ENCODE measurements at regions of chr3 and their contacts with region 1.

Region 1: DNA sequence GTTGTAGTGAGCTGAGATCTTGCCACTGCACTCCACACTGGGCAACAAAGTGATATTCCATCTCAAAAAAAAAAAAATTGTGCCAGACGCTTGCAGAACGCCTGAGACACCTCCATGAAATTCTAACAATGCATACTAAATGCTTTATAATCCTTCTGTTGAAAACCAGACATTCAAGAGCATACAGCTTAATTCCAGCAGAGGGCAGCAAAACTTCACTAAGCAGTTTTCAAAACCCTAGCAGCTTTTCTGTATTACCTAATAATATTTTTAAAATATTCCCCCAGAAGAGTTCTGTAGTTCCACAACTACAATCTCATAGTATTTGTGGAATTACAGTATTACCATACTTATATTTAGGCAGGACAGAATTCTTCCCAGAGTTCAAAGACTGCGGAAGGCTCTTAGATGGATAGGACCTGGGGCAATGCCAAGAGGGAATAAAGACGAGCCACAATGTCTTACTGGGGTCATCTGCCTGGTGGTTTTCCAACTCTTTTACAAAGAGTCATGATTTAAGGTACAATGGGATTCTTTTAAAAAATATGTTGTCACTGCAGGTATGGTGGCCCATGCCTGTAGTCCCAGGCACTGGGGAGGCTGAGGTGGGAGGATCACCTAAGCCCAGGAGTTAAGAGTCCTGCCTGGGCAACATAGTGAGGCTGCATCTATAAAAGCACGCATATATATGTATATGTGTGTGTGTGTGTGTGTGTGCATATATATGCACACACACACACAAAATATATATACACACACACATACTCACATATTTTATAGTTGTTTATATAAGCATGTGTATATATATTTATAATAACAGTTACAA is 19.6 kb upstream of the TASOR start:
- DNase-seq: peak; percentile 77
- H3K4me3 Mint-ChIP-seq: no peak overlapping the region
- H3K27ac Mint-ChIP-seq: no peak overlapping the region
- H3K4me1 Mint-ChIP-seq: no peaks in the 10 kb centered on the region
- H3K27me3 Mint-ChIP-seq: no peaks in the 10 kb centered on the region
- CTCF ChIP-seq: peak; percentile 75

Region 2: DNA sequence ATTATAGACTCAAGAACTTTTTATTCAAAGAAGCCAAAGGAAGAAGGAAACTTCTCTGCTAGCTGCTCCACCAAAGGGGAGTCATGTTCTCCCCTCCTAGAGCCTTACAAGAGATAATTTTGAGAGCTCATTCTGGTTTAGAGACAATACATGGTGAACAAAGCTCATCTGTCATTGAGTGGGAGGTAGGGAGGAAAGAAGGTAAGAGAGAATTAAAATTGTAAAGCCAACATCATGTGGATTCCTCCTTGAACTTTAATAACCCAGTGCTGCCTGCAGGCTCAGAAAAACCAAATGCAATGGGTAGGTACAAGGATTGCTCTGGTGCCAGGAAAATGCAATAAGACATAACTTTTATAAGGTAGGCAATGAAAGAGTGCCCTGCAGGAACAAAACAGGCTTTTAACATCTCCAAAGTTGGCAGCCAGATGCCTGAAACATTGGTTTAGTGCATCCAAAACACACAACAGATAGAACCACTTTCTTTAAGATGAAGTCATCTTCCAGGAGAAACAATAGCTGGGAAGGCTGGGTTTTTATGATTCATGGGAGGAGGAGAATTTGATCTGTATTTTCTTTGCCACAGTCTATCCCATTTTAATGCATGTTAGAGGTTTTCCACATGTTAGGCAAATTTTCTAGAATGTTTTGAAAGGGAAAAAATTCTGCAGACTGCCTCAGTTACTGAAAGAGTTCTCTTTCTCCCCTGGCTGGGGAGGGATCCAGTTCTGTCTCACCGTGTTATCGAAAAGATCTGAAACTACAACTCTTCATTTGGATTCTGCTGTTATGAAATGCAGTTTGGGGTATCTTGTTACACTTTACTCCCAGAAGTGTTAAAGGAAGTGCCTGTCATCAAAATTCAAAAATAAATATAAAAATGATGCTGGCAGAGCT is 110.3 kb after region 1 on chr3:
- CTCF ChIA-PET with region 1: interaction called, 11 read pairs
- POLR2A ChIA-PET with region 1: interaction called, 4 read pairs
- intact Hi-C with region 1: no loop called
- DNase-seq: peak; percentile 54
- H3K4me3 Mint-ChIP-seq: no peak overlapping the region
- H3K27ac Mint-ChIP-seq: peak overlapping the region; percentile 69
- H3K4me1 Mint-ChIP-seq: peaks cover 11% of the 10 kb centered on the region
- H3K27me3 Mint-ChIP-seq: no peaks in the 10 kb centered on the region
- CTCF ChIP-seq: no peak

Region 3: GRCh38 chr3:56980798-56981390 is 278.2 kb after region 1 on chr3:
- CTCF ChIA-PET with region 1: interaction called, 234 read pairs
- POLR2A ChIA-PET with region 1: no interaction called
- intact Hi-C with region 1: no loop called
- DNase-seq: peak; percentile 97
- H3K4me3 Mint-ChIP-seq: no peak overlapping the region
- H3K27ac Mint-ChIP-seq: peak overlapping the region; percentile 12
- H3K4me1 Mint-ChIP-seq: peaks cover 14% of the 10 kb centered on the region
- H3K27me3 Mint-ChIP-seq: no peaks in the 10 kb centered on the region
- CTCF ChIP-seq: no peak

Region 4: DNA sequence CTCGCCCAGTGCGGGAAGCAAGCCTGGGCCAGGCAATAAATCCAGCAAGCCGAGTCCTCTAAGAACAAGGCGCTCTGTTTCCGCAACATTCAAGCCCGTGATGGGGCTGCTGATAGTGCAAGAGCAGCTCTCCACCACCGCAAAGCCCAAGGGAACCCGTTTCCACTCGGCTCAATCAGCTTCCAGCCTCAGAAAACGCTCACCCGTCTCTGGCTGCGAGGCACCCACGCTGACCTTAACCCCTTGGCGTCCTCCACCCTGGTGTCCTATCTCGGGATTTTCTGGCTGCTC is 375.6 kb after region 1 on chr3:
- CTCF ChIA-PET with region 1: no interaction called
- POLR2A ChIA-PET with region 1: no interaction called
- intact Hi-C with region 1: loop called (anchors 10 kb)
- DNase-seq: no peak
- H3K4me3 Mint-ChIP-seq: peak overlapping the region; percentile 73
- H3K27ac Mint-ChIP-seq: no peak overlapping the region
- H3K4me1 Mint-ChIP-seq: peaks cover 5% of the 10 kb centered on the region
- H3K27me3 Mint-ChIP-seq: no peaks in the 10 kb centered on the region
- CTCF ChIP-seq: no peak

Region 5: DNA sequence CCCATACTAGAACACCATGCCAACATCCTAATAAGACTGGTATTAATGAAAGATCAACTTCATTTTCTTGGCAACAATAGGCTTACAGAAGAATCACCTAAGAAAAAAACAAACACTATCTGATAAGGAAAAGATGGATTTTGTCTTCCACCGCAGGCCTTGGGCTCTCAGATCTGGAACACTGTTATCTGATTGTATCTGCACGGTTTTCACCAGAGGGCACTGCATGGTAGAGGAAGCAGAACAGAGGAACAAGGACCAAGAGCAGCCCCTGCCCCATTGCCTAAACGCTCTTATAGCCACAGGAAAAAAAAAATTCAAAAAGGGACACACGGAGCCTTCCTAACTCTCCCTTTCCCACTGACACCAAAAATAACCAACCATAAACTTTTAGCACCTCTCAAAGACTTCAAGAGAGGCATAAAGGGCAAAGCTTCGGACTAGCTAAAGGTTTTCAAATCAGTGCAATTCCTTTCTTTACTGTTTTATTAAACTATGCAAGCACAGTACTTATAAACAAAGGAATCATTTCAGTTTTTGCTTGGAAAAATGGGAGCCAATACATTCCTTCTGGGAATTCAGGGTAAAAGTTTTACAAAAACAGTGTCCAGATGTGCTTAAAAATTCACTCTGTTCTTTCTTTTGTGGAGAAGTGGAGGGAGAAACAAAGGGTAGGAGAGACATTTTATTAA is 439.2 kb after region 1 on chr3:
- CTCF ChIA-PET with region 1: no interaction called
- POLR2A ChIA-PET with region 1: no interaction called
- intact Hi-C with region 1: no loop called
- DNase-seq: no peak
- H3K4me3 Mint-ChIP-seq: no peak overlapping the region
- H3K27ac Mint-ChIP-seq: no peak overlapping the region
- H3K4me1 Mint-ChIP-seq: no peaks in the 10 kb centered on the region
- H3K27me3 Mint-ChIP-seq: peaks cover 17% of the 10 kb centered on the region
- CTCF ChIP-seq: no peak

Region 6: DNA sequence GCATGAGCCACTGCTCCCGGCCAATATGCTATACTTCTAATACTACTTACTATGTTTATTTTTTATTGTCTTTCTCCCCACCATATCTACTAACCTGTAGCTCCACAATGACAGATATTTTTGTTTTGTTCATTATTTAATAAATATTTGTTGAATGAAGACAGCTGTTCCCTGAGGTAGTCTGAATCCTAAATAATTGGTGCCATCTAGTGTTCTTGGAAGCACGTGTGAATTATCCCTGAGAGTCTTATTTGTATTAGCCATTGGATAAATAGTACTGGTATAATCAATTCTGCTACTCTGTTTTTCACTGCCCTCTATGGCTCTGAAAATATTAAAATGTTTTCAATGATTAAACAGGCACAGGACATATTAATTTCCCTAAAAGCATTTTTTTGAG is 519.2 kb after region 1 on chr3:
- CTCF ChIA-PET with region 1: no interaction called
- POLR2A ChIA-PET with region 1: no interaction called
- intact Hi-C with region 1: loop called (anchors 5 kb)
- DNase-seq: peak; percentile 39
- H3K4me3 Mint-ChIP-seq: no peak overlapping the region
- H3K27ac Mint-ChIP-seq: no peak overlapping the region
- H3K4me1 Mint-ChIP-seq: peaks cover 5% of the 10 kb centered on the region
- H3K27me3 Mint-ChIP-seq: no peaks in the 10 kb centered on the region
- CTCF ChIP-seq: peak; percentile 40

Measured in MCF 10A (cell line).